ENCODE measurements at regions of chr4 and their contacts with region 1.

Region 1: GRCh38 chr4:176778491-176778890 is 14.2 kb downstream of the VEGFC start:
- DNase-seq: no peak
- H3K4me3 ChIP-seq: no peak overlapping the region
- H3K27ac ChIP-seq: no peak overlapping the region
- H3K27me3 ChIP-seq: no peaks in the 10 kb centered on the region
- CTCF ChIP-seq: no peak

Region 2: DNA sequence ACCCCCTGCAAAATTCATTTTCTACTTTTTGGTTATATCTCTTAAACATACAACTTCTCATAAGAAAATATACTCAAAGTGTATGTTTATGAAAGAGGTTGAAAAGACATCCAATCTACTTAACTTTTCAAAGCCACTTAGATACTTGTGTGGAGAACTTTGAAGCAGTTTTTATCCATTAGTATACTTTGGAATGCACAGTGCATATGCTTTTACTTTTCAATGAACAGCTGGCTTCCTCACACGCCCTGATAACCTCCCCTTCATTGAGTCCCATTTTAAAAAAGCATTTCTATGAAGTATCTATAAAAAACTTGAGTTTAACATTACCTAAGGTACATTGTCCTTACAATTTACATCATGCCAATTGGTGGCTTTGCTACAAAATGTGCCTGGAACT is 59.6 kb before region 1 on chr4:
- CTCF ChIA-PET with region 1: no interaction called
- POLR2A ChIA-PET with region 1: interaction called, 12 read pairs
- DNase-seq: no peak
- H3K4me3 ChIP-seq: no peak overlapping the region
- H3K27ac ChIP-seq: no peak overlapping the region
- H3K27me3 ChIP-seq: no peaks in the 10 kb centered on the region
- CTCF ChIP-seq: no peak

Measured in AG04450 (cell line).